ENCODE measurements at regions of chr16 and their contacts with region 1.

Region 1: GRCh38 chr16:10256784-10257641 is 74.8 kb upstream of the GRIN2A start:
- DNase-seq: no peak
- H3K4me3 ChIP-seq: no peak overlapping the region
- H3K27ac ChIP-seq: no peak overlapping the region
- H3K27me3 ChIP-seq: no peaks in the 10 kb centered on the region
- CTCF ChIP-seq: peak; percentile 74

Region 2: DNA sequence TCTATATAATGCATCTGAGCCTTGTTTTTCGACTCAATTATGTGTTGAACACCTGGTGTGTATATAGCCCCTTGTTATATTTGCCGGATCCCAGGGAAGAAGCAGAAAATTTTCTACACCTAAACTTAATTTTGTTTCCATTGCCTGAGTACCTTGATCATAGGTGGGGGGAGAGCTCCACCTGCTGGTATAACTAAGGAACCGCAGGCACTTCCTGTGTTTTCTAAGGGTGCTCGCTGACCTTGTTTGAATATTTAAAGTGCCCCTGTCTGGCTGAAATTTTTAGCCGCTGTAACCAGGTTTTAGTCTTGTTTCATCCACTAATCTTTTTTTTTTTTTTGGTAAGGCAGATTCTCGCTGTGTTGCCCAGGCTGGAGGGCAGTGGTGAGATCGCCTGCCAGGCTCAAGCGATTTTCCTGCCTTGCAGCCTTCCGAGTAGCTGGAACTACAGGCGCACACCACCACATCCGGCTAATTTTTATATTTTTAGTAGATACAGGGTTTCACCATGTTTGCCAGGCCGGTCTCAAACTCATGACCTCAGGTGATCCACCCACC is 480.1 kb after region 1 on chr16:
- CTCF ChIA-PET with region 1: interaction called, 17 read pairs
- POLR2A ChIA-PET with region 1: no interaction called
- DNase-seq: peak; percentile 38
- H3K4me3 ChIP-seq: no peak overlapping the region
- H3K27ac ChIP-seq: no peak overlapping the region
- H3K27me3 ChIP-seq: no peaks in the 10 kb centered on the region
- CTCF ChIP-seq: peak; percentile 95

Measured in AG04450 (cell line).